Activated B cell treated with CpG ODN at 0.5 μM for 24 hours (primary cell): ENCODE measurements at regions of chr7 and their contacts with region 1.

Region 1: DNA sequence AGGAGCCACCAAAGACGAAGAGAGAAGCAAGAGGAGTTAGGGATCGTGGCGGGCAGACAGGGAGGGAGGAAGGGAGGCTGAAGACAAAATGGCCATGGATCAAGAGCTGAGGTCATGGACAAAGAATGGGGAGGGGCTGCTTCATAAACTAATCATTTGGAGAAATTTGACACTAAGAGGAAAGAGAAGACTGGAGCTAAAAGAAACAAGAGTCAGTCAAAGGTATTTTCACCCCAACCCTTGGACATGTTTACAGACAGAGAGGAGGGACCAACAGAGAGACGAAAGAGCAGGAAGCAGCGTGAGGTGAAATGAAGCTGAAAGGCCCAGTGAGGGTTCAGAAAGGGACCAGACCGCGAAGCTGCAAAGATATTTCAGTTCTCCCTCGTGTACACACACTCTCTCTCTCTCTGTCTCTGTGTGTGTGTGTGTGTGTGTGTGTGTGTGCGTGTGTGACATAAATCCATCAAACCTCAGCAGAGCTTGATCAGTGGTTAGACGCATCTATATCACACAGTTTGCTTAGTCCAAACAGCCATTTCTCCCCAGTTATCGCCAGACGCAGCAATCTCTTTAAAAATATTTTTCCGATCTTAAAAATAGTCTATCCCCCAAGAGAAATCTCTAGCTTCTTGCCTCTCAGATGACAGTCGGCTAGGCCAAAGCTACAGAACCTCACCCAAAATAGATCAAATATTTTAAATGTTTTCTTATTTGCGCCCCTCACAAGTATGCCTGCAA is 12.5 kb upstream of the CALD1 start:
- DNase-seq: peak; percentile 27
- ATAC-seq: peak; percentile 90
- H3K4me3 Mint-ChIP-seq: peak overlapping the region; percentile 55
- H3K27ac Mint-ChIP-seq: peak overlapping the region; percentile 89
- H3K4me1 Mint-ChIP-seq: peaks cover 33% of the 10 kb centered on the region
- H3K27me3 Mint-ChIP-seq: no peaks in the 10 kb centered on the region
- CTCF ChIP-seq: no peak

Region 2: DNA sequence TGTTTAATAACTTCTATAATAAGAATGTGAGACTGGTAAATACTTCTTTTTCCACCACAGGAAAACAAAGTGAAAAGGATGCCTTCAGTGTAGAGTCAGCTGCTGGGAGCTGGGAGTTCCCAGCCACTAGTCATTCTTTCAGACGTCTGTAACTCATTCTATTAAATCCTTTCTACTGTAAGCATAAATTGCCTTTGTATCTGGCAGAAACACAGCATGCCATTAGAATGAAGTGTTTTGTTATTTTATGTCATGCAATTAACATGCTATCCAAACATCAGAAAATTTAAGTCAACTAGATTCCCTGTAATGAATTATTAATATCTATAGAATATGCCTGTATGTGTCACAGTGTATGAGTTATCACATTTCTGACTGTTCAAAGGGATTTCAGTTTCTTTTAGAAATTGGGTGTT is 106.0 kb before region 1 on chr7:
- CTCF ChIA-PET with region 1: no interaction called
- POLR2A ChIA-PET with region 1: no interaction called
- intact Hi-C with region 1: no loop called
- DNase-seq: no peak
- ATAC-seq: no peak
- H3K4me3 Mint-ChIP-seq: no peak overlapping the region
- H3K27ac Mint-ChIP-seq: no peak overlapping the region
- H3K4me1 Mint-ChIP-seq: no peaks in the 10 kb centered on the region
- H3K27me3 Mint-ChIP-seq: no peaks in the 10 kb centered on the region
- CTCF ChIP-seq: no peak

Region 3: DNA sequence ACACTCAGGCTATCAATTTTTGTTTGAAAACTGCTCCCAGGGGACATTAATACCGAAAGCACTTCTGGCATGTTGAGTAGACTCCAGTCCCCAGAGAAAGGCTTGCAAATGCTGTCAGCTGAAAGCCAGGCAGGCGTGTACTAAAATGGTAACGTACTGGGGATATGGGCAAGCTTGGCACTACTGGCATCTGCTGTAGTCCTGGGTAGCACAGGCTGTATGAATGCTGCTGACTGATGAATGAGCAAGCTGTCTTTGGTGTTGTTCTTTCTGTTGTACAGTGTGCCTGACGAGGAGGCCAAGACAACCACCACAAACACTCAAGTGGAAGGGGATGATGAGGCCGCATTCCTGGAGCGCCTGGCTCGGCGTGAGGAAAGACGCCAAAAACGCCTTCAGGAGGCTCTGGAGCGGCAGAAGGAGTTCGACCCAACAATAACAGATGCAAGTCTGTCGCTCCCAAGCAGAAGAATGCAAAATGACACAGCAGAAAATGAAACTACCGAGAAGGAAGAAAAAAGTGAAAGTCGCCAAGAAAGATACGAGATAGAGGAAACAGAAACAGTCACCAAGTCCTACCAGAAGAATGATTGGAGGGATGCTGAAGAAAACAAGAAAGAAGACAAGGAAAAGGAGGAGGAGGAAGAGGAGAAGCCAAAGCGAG is 165.9 kb after region 1 on chr7:
- CTCF ChIA-PET with region 1: no interaction called
- POLR2A ChIA-PET with region 1: no interaction called
- intact Hi-C with region 1: loop called (anchors 10 kb)
- DNase-seq: no peak
- ATAC-seq: peak; percentile 95
- H3K4me3 Mint-ChIP-seq: peak overlapping the region; percentile 72
- H3K27ac Mint-ChIP-seq: peak overlapping the region; percentile 78
- H3K4me1 Mint-ChIP-seq: peaks cover 23% of the 10 kb centered on the region
- H3K27me3 Mint-ChIP-seq: no peaks in the 10 kb centered on the region
- CTCF ChIP-seq: no peak